ENCODE measurements at regions of chr20 and their contacts with region 1.

Region 1: DNA sequence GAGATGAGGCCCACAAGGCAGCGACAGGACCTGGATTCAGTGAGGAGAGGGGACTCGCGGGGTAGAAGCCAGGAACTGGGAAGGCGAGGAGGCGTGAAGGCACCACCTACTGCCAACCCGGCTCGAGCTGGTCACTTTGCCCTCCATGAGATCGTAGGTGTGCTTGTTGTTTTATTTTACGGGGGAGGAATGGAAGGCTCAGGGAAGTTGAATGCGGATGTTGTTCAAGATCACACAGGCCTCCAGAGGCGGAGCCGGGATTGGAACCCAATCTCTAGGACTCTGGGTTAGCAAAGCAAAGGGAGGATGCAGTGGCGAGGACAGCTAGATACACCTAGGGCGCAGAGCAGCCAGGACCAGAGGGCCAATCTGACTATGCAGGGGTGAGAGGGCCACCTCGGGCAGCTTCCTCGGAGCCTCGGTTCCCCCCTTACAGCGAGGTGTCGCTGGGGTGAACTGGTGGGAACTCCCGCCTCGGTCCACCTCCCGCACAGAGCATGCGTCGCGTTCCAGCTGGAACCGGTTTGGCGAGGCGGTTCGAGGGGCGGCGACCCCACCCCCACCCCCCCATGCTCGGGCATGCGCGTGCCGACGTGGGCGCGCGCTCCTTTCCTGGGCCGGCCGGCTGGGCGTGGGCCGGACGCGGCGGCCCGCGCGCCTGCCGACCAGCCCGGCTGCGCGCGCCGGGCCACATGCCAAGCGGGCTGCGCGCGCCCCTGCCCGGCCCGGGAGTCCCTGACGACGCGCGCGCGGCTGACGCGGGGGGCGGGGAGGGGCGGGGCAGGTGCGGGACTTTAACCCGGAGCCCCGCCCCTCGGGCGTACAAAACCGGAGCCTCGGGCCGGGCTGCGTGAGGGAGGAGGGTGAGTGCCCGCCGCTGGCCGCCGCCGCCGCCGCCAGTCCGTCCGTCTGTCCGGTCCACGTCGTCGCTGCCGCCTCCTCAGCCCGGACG is 80.4 kb upstream of the MYL9 start:
- DNase-seq: peak; percentile 95
- ATAC-seq: peak; percentile 78
- H3K4me3 Mint-ChIP-seq: peak overlapping the region; percentile 67
- H3K27ac Mint-ChIP-seq: peak overlapping the region; percentile 83
- H3K4me1 Mint-ChIP-seq: peaks cover 47% of the 10 kb centered on the region
- H3K27me3 Mint-ChIP-seq: no peaks in the 10 kb centered on the region

Region 2: DNA sequence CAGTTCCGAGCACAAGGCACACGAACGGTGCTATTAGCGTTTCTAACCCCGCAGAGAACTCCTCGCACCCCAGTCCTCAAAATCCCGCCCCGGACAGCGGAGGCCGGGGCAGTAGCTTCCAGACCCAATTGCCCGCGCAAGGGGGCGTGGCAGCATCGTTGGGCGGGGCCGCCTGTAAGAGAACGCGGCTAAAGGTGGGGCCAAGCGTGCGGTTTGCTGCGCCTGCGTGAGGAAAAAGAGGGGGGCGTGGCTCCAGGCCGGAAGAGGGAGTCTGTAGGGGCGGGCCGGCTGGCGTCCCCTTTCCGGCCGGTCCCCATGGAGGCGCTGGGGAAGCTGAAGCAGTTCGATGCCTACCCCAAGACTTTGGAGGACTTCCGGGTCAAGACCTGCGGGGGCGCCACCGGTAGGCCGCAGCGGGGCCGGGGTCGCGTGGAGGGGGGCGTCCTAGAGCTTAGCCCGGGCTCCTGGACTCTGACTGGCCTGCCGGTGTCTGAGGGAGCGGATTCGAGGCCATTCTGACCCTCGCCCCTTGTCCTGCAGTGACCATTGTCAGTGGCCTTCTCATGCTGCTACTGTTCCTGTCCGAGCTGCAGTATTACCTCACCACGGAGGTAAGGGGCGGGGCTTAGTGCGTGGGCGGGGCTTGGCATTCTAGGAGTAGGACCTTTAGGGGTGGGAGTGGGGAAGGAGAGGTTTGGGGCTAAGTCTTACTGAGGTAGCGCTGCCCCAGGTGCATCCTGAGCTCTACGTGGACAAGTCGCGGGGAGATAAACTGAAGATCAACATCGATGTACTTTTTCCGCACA is 918.9 kb before region 1 on chr20 and contains the start of gene ERGIC3:
- CTCF ChIA-PET with region 1: no interaction called
- POLR2A ChIA-PET with region 1: no interaction called
- intact Hi-C with region 1: loop called in 1 of 2 experiments (anchors 5 kb)
- DNase-seq: peak; percentile 99
- ATAC-seq: peak; percentile 99
- H3K4me3 Mint-ChIP-seq: peak within 1 kb of the TSS; percentile 83
- H3K27ac Mint-ChIP-seq: peak within 1 kb of the TSS; percentile 83
- H3K4me1 Mint-ChIP-seq: peaks cover 15% of the 10 kb centered on the region
- H3K27me3 Mint-ChIP-seq: no peaks in the 10 kb centered on the region
- total RNA-seq, gene ERGIC3: 109 to 127 TPM

Region 3: GRCh38 chr20:36439040-36439730 is 21.7 kb before region 1 on chr20:
- CTCF ChIA-PET with region 1: interaction called, 8 read pairs
- POLR2A ChIA-PET with region 1: interaction called, 3 read pairs
- intact Hi-C with region 1: loop called in 1 of 2 experiments (anchors 1 kb)
- DNase-seq: peak; percentile 81
- ATAC-seq: peak; percentile 45
- H3K4me3 Mint-ChIP-seq: no peak overlapping the region
- H3K27ac Mint-ChIP-seq: no peak overlapping the region
- H3K4me1 Mint-ChIP-seq: peaks cover 2% of the 10 kb centered on the region
- H3K27me3 Mint-ChIP-seq: no peaks in the 10 kb centered on the region

Region 4: DNA sequence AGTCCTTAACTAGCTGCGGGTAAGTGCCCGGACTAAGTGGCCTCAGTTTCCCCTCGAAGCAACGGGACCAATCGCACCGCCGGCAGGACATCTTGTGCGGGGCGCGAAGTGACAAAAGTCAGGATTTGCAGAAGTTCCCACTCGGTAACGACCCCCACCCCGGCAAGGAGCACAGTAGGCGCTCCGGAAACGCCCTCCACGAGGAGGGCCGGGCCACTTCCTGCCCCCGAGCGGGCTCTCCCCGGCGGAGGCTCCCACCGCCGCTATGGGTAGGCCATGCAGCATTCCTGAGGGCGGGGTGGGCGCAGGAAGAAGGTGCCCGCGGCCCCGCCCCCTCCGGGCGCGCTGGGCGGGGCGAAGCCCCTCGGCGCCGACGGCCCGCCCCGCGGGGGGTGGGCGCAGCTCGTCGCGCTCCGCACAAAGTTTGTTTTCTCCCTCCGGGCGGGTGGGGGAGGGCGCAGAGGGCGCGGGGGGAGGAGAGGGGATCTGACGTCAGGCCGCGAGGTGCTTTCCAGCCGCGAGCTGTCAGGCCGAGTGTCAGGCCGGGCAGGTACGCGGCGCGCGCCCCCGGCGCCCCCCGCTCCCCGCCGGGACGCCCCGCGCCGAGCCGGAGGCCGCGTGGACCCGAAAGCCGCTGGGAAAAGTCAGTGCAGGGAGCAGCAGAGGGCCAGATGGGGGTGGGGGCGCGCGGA is 112.3 kb after region 1 on chr20 and contains the start of gene TGIF2:
- CTCF ChIA-PET with region 1: no interaction called
- POLR2A ChIA-PET with region 1: no interaction called
- intact Hi-C with region 1: loop called (anchors 1 to 10 kb)
- DNase-seq: peak; percentile 95
- ATAC-seq: peak; percentile 75
- H3K4me3 Mint-ChIP-seq: peak within 1 kb of the TSS; percentile 88
- H3K27ac Mint-ChIP-seq: peak within 1 kb of the TSS; percentile 93
- H3K4me1 Mint-ChIP-seq: peaks cover 35% of the 10 kb centered on the region
- H3K27me3 Mint-ChIP-seq: no peaks in the 10 kb centered on the region
- total RNA-seq, gene TGIF2: 44.9 to 48.7 TPM

Region 5: DNA sequence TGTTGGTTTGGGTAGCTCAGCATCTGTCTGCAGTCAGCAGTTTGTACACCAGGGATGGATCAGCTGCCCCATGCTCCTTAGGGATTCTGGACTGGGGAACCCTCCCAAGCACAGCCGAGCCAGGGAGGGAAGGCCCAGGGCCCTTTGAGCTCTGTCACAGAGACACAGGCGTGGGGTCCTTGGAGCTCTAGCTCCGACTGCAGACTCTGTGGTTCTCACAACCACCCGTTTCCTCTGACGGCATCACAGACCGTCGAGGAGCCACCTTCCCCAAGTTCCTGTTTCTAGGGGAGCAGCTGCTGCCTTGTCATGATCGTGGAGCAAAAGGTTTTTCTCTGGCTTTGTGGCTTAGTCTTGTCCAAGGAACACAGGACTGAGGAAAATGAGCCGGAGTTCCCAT is 185.1 kb after region 1 on chr20 and contains the start of gene SLA2:
- CTCF ChIA-PET with region 1: no interaction called
- POLR2A ChIA-PET with region 1: no interaction called
- intact Hi-C with region 1: loop called in 1 of 2 experiments (anchors 1 kb)
- DNase-seq: peak; percentile 79
- ATAC-seq: peak; percentile 62
- H3K4me3 Mint-ChIP-seq: peak within 1 kb of the TSS; percentile 81
- H3K27ac Mint-ChIP-seq: peak within 1 kb of the TSS; percentile 99
- H3K4me1 Mint-ChIP-seq: peaks cover 41% of the 10 kb centered on the region
- H3K27me3 Mint-ChIP-seq: no peaks in the 10 kb centered on the region
- total RNA-seq, gene SLA2: 48.7 to 52.6 TPM

Region 6: GRCh38 chr20:36835453-36836198 is 374.7 kb after region 1 on chr20:
- CTCF ChIA-PET with region 1: no interaction called
- POLR2A ChIA-PET with region 1: no interaction called
- intact Hi-C with region 1: loop called in 1 of 2 experiments (anchors 1 kb)
- DNase-seq: peak; percentile 94
- ATAC-seq: peak; percentile 98
- H3K4me3 Mint-ChIP-seq: peak overlapping the region; percentile 76
- H3K27ac Mint-ChIP-seq: peak overlapping the region; percentile 85
- H3K4me1 Mint-ChIP-seq: peaks cover 13% of the 10 kb centered on the region
- H3K27me3 Mint-ChIP-seq: no peaks in the 10 kb centered on the region

Region 7: GRCh38 chr20:36881888-36882287 is 421.0 kb after region 1 on chr20:
- CTCF ChIA-PET with region 1: no interaction called
- POLR2A ChIA-PET with region 1: no interaction called
- intact Hi-C with region 1: no loop called
- DNase-seq: peak; percentile 37
- ATAC-seq: peak; percentile 94
- H3K4me3 Mint-ChIP-seq: no peak overlapping the region
- H3K27ac Mint-ChIP-seq: no peak overlapping the region
- H3K4me1 Mint-ChIP-seq: peaks cover 8% of the 10 kb centered on the region
- H3K27me3 Mint-ChIP-seq: no peaks in the 10 kb centered on the region

Measured in activated CD4-positive, alpha-beta T cell treated with anti-CD3 and anti-CD28 coated beads for 36 hours (primary cell).